ENCODE measurements at regions of chr6 and their contacts with region 1.

Region 1: DNA sequence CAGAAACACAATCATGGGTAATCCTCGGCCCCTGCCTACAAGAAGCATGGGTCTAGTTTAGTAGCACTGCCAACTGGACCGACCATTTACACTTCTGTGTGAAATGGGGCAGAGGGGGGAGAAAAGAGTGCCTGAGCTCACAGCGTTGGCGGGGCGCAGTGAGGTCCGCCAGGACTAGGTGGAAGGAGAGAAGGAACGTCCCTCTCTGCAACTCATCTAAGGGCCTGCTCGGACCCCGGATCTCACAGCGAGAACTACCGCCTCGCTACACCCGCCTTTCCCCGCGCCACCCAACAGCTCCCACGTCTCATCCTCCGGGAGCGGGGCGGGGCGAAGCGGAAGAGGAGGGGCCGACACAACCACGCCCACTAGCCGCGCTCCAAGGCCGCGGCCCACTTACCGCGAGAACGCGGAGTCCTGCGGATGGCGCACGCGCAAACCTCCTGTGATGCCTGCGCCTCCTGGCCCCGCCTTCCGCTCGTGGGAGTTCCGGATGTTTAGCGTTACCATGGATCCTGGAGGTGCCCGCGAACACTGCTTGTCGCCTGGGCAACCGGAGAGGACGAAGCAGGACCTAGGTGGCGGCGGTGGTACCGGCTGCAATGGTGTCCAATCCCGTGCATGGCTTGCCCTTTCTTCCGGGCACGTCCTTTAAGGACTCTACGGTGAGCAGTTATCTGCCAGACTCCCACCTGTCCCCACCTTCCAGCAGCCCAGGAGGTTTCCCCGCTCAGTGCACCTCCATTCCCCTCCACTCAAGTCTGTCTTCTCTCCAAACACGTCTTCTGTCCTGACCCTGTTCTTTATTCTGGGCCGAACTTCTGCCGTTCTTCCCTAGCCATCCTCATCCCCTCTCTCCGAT is at the start of gene EFHC1:
- DNase-seq: peak; percentile 97 to 98 (median 97)
- H3K4me3 ChIP-seq: peak within 1 kb of the TSS; percentile 71
- H3K4me3 Mint-ChIP-seq: no peak within 1 kb of the TSS
- H3K27ac ChIP-seq: peak within 1 kb of the TSS; percentile 59
- H3K27ac Mint-ChIP-seq: peak within 1 kb of the TSS in 3 of 7 donors; percentile 69 to 94 (median 85)
- H3K4me1 ChIP-seq: peaks cover 24% of the 10 kb centered on the region
- H3K4me1 Mint-ChIP-seq: peaks cover 12 to 21% (median 16%) of the 10 kb centered on the region in 4 donors
- H3K27me3 ChIP-seq: no peaks in the 10 kb centered on the region
- H3K27me3 Mint-ChIP-seq: no peaks in the 10 kb centered on the region
- total RNA-seq, gene EFHC1: 6.4 to 10.4 TPM

Region 2: GRCh38 chr6:52361945-52362442 is 58.0 kb before region 1 on chr6 and contains the start of gene PAQR8:
- CTCF ChIA-PET with region 1: interaction called, 19 read pairs
- POLR2A ChIA-PET with region 1: interaction called, 13 read pairs
- intact Hi-C with region 1: no loop called
- DNase-seq: peak; percentile 77 to 88 (median 85)
- H3K4me3 ChIP-seq: peak within 1 kb of the TSS; percentile 62 to 97
- H3K4me3 Mint-ChIP-seq: peak within 1 kb of the TSS; percentile 93 to 99 (median 98)
- H3K27ac ChIP-seq: peak within 1 kb of the TSS; percentile 90
- H3K27ac Mint-ChIP-seq: peak within 1 kb of the TSS; percentile 90 to 98 (median 98)
- H3K4me1 ChIP-seq: peaks cover 41% of the 10 kb centered on the region
- H3K4me1 Mint-ChIP-seq: peaks cover 28 to 53% (median 41%) of the 10 kb centered on the region in 4 donors
- H3K27me3 ChIP-seq: no peaks in the 10 kb centered on the region
- H3K27me3 Mint-ChIP-seq: no peaks in the 10 kb centered on the region
- total RNA-seq, gene PAQR8: 36.4 to 40.9 TPM

Region 3: DNA sequence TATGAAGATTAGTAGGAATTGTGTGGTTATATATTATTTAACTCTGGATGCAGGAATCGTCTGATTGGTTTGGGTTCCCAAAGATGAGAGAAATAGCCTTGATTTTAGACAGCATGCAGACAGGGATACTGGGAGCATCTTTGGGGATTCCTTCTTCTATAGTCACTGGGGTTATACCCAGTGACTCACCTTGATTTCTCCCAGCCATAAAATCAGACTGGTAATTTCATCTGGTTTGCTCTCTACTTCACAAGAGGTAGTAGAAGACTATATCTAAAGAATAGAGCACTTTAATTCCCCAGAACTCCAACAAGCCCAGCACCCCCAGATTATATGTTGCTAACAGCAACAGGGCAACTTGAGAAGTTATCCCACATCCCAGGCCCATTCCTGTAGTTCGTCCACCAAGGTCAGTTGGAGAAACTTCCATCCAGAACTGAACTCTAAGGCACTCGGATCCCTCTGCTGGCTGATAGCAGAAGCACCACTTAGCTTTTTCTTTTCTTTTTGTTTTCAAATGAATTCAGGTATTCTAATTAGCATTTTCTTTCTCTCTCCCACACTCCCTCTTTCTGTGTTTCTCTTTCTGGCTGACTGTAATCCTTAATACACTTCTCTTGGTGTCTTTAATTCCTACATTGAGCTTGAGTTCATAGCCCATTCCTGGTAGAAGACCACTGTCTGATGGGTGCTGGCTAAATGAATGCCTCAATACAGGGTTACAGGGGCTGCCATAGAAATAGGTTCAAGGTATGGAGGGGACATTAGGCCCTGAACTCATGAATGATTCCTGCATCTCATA is 20.3 kb before region 1 on chr6:
- CTCF ChIA-PET with region 1: interaction called, 99 read pairs
- POLR2A ChIA-PET with region 1: interaction called, 9 read pairs
- intact Hi-C with region 1: loop called (anchors 1 kb)
- DNase-seq: peak; percentile 36 to 53 (median 47)
- H3K4me3 ChIP-seq: no peak overlapping the region
- H3K4me3 Mint-ChIP-seq: peak overlapping the region in 7 of 8 donors; percentile 32 to 82 (median 63)
- H3K27ac ChIP-seq: peak overlapping the region; percentile 67
- H3K27ac Mint-ChIP-seq: peak overlapping the region; percentile 95 to 99 (median 96)
- H3K4me1 ChIP-seq: peaks cover 68% of the 10 kb centered on the region
- H3K4me1 Mint-ChIP-seq: peaks cover 51 to 84% (median 60%) of the 10 kb centered on the region in 4 donors
- H3K27me3 ChIP-seq: no peaks in the 10 kb centered on the region
- H3K27me3 Mint-ChIP-seq: no peaks in the 10 kb centered on the region

Region 4: GRCh38 chr6:52435345-52435744 is 15.3 kb after region 1 on chr6:
- CTCF ChIA-PET with region 1: no interaction called
- POLR2A ChIA-PET with region 1: no interaction called
- intact Hi-C with region 1: no loop called
- DNase-seq: no peak
- H3K4me3 ChIP-seq: no peak overlapping the region
- H3K4me3 Mint-ChIP-seq: no peak overlapping the region
- H3K27ac ChIP-seq: no peak overlapping the region
- H3K27ac Mint-ChIP-seq: no peak overlapping the region
- H3K4me1 ChIP-seq: no peaks in the 10 kb centered on the region
- H3K4me1 Mint-ChIP-seq: no peaks in the 10 kb centered on the region
- H3K27me3 ChIP-seq: no peaks in the 10 kb centered on the region
- H3K27me3 Mint-ChIP-seq: no peaks in the 10 kb centered on the region

Region 5: GRCh38 chr6:52577022-52577777 is 157.2 kb after region 1 on chr6 and contains the start of gene TRAM2:
- CTCF ChIA-PET with region 1: interaction called, 6 read pairs
- POLR2A ChIA-PET with region 1: interaction called, 22 read pairs
- intact Hi-C with region 1: loop called (anchors 1 kb)
- DNase-seq: peak; percentile 73 to 83 (median 79)
- H3K4me3 ChIP-seq: peak within 1 kb of the TSS; percentile 19 to 81
- H3K4me3 Mint-ChIP-seq: peak within 1 kb of the TSS; percentile 80 to 95 (median 88)
- H3K27ac ChIP-seq: peak within 1 kb of the TSS; percentile 65
- H3K27ac Mint-ChIP-seq: peak within 1 kb of the TSS; percentile 88 to 95 (median 91)
- H3K4me1 ChIP-seq: peaks cover 46% of the 10 kb centered on the region
- H3K4me1 Mint-ChIP-seq: peaks cover 32 to 60% (median 38%) of the 10 kb centered on the region in 4 donors
- H3K27me3 ChIP-seq: no peaks in the 10 kb centered on the region
- H3K27me3 Mint-ChIP-seq: no peaks in the 10 kb centered on the region
- total RNA-seq, gene TRAM2: 10.7 to 11.3 TPM

Region 6: DNA sequence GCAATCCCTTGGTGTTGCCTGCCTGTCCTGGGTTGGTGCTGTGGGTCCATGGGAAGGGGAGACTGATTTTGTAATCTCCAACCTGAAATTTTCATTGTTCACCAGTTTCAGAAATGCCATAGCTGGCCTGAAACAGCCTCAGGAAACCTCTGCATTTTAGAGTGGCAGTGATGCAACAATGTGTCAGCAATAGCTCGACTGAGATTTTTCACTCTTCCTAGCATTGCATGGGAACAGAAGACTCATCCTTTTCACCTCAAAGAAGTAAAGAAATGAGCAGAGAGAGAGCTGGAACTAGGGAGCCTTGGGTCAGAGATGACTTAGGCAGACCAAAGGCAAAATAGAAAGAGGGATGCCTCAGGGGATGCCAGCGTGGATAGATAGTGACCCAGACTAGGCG is 227.2 kb after region 1 on chr6:
- CTCF ChIA-PET with region 1: interaction called, 52 read pairs
- POLR2A ChIA-PET with region 1: no interaction called
- intact Hi-C with region 1: no loop called
- DNase-seq: no peak
- H3K4me3 ChIP-seq: no peak overlapping the region
- H3K4me3 Mint-ChIP-seq: no peak overlapping the region
- H3K27ac ChIP-seq: no peak overlapping the region
- H3K27ac Mint-ChIP-seq: no peak overlapping the region
- H3K4me1 ChIP-seq: no peaks in the 10 kb centered on the region
- H3K4me1 Mint-ChIP-seq: peaks cover 3 to 7% (median 4%) of the 10 kb centered on the region in 4 donors
- H3K27me3 ChIP-seq: peaks cover 6% of the 10 kb centered on the region
- H3K27me3 Mint-ChIP-seq: peaks cover 6 to 10% of the 10 kb centered on the region in 2 donors

Region 7: GRCh38 chr6:53064726-53065215 is 644.7 kb after region 1 on chr6:
- CTCF ChIA-PET with region 1: no interaction called
- POLR2A ChIA-PET with region 1: no interaction called
- intact Hi-C with region 1: loop called (anchors 1 kb)
- DNase-seq: peak; percentile 93 to 99 (median 96)
- H3K4me3 ChIP-seq: peak overlapping the region; percentile 74 to 99
- H3K4me3 Mint-ChIP-seq: peak overlapping the region; percentile 98 to 100 (median 99)
- H3K27ac ChIP-seq: peak overlapping the region; percentile 63
- H3K27ac Mint-ChIP-seq: peak overlapping the region; percentile 86 to 99 (median 99)
- H3K4me1 ChIP-seq: peaks cover 52% of the 10 kb centered on the region
- H3K4me1 Mint-ChIP-seq: peaks cover 34 to 73% (median 54%) of the 10 kb centered on the region in 4 donors
- H3K27me3 ChIP-seq: no peaks in the 10 kb centered on the region
- H3K27me3 Mint-ChIP-seq: no peaks in the 10 kb centered on the region